Dendritic cell treated with granulocyte-macrophage colony-stimulating factor and Interleukin-4, amounts not matched to agents 40 ng/mL and 50 ng/mL, for 4 days (primary cell): ENCODE measurements at regions of chr18 and their contacts with region 1.

Region 1: GRCh38 chr18:54269893-54270844 is 852 bp downstream of the POLI start:
- H3K4me3 Mint-ChIP-seq: peak overlapping the region; percentile 69
- H3K27ac Mint-ChIP-seq: peak overlapping the region; percentile 91
- H3K4me1 Mint-ChIP-seq: peaks cover 12% of the 10 kb centered on the region
- H3K27me3 Mint-ChIP-seq: no peaks in the 10 kb centered on the region

Region 2: DNA sequence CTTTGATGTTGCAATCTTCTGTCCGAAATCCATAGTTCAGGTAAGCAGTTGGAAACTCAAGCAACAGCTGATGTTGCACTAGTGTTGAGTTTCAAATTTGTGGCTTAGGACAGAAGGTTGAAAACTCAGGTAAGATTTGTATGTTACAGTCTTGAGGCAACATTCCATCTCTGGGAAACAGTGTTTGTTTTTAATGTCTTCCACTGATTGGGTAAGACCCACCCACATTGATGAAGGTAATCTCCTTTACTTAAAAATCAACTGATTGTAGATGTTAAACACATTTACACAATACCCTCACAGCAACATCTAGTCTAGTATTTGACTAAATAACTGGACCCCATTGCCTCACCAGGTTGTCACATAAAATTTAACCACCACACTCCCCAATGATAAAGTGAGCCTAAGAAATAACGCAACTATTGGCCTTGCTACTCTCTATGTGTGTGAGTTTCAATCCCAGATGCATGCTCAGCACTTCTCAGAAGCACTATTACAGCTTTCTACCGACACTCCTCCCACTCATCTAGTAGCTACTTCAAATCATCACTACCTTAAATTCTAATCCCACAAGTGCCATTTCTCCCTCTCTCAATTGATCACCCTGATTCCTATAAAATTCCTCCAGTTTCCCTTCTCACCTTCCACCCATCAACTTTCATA is 209.7 kb before region 1 on chr18:
- intact Hi-C with region 1: no loop called
- H3K4me3 Mint-ChIP-seq: no peak overlapping the region
- H3K27ac Mint-ChIP-seq: no peak overlapping the region
- H3K4me1 Mint-ChIP-seq: no peaks in the 10 kb centered on the region
- H3K27me3 Mint-ChIP-seq: no peaks in the 10 kb centered on the region

Region 3: GRCh38 chr18:54224379-54225014 is 45.7 kb before region 1 on chr18 and contains the start of gene MBD2:
- intact Hi-C with region 1: loop called (anchors 1 kb)
- H3K4me3 Mint-ChIP-seq: peak within 1 kb of the TSS; percentile 94
- H3K27ac Mint-ChIP-seq: peak within 1 kb of the TSS; percentile 97
- H3K4me1 Mint-ChIP-seq: peaks cover 38% of the 10 kb centered on the region
- H3K27me3 Mint-ChIP-seq: no peaks in the 10 kb centered on the region

Region 4: GRCh38 chr18:54254265-54254770 is 15.9 kb before region 1 on chr18:
- intact Hi-C with region 1: loop called (anchors 2 kb)
- H3K4me3 Mint-ChIP-seq: no peak overlapping the region
- H3K27ac Mint-ChIP-seq: no peak overlapping the region
- H3K4me1 Mint-ChIP-seq: peaks cover 44% of the 10 kb centered on the region
- H3K27me3 Mint-ChIP-seq: no peaks in the 10 kb centered on the region

Region 5: DNA sequence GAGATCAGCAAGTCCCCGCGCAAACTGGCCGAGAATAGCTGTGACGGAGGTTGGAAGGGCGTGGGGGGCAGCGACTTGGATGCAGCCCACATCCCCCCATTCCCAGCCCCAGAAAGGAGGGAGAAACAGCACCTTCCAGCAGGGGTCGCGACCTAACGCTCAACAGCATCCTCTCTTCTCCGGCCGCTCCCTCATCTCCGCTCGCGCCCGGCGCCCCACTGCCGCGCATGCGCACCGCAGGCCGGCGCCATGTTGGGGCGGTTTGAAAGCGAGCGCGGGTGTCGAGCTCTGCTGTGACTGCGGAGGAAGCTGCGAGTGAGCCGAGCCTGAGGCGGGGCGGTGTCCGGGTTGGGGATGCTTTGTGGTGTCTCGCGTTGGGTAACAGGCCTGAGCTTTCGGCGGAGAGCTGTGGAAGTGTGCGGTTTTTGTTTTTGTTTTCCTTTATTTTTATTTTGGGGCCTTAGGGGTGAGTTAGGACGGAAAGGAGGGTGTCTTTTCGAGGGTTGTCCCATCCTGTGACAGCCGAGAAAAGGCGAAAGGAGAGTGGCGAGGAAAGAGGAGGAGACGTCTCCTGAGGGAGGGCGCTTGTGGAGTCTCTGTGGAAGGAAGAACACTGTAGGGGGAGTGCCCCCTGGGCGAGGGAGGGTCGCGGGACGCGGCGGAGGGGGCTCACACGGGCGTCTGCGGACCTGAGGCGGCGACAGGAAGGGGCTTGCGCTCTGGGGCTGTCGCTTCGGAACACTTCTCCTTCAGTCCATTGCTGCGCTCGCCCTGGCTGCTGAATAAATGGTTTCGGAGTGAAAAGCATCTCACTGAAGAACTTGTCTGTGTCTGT is 87.7 kb after region 1 on chr18 and contains the starts of genes C18orf54 and STARD6:
- intact Hi-C with region 1: loop called (anchors 5 kb)
- H3K4me3 Mint-ChIP-seq: peak within 1 kb of the TSS; percentile 99
- H3K27ac Mint-ChIP-seq: peak within 1 kb of the TSS; percentile 88
- H3K4me1 Mint-ChIP-seq: peaks cover 16% of the 10 kb centered on the region
- H3K27me3 Mint-ChIP-seq: peaks cover 6% of the 10 kb centered on the region